CD4-positive, alpha-beta memory T cell (primary cell): ENCODE measurements at regions of chr17 and their contacts with region 1.

Region 1: GRCh38 chr17:66165513-66166123 is 26.3 kb downstream of the CEP112 start:
- DNase-seq: peak in 4 of 5 donors; percentile 47 to 56 (median 52)
- H3K4me3 ChIP-seq: no peak overlapping the region
- H3K4me3 Mint-ChIP-seq: no peak overlapping the region
- H3K27ac ChIP-seq: no peak overlapping the region
- H3K27ac Mint-ChIP-seq: no peak overlapping the region
- H3K4me1 ChIP-seq: no peaks in the 10 kb centered on the region
- H3K4me1 Mint-ChIP-seq: peaks cover 10 to 20% (median 13%) of the 10 kb centered on the region in 4 donors
- H3K27me3 ChIP-seq: no peaks in the 10 kb centered on the region
- H3K27me3 Mint-ChIP-seq: no peaks in the 10 kb centered on the region

Region 2: GRCh38 chr17:65231662-65232335 is 933.8 kb before region 1 on chr17:
- CTCF ChIA-PET with region 1: interaction called, 9 read pairs
- POLR2A ChIA-PET with region 1: no interaction called
- intact Hi-C with region 1: loop called (anchors 1 kb)
- DNase-seq: peak; percentile 42 to 51 (median 46)
- H3K4me3 ChIP-seq: no peak overlapping the region
- H3K4me3 Mint-ChIP-seq: no peak overlapping the region
- H3K27ac ChIP-seq: no peak overlapping the region
- H3K27ac Mint-ChIP-seq: no peak overlapping the region
- H3K4me1 ChIP-seq: peaks cover 24% of the 10 kb centered on the region
- H3K4me1 Mint-ChIP-seq: peaks cover 23 to 46% (median 26%) of the 10 kb centered on the region in 4 donors
- H3K27me3 ChIP-seq: no peaks in the 10 kb centered on the region
- H3K27me3 Mint-ChIP-seq: no peaks in the 10 kb centered on the region

Region 3: DNA sequence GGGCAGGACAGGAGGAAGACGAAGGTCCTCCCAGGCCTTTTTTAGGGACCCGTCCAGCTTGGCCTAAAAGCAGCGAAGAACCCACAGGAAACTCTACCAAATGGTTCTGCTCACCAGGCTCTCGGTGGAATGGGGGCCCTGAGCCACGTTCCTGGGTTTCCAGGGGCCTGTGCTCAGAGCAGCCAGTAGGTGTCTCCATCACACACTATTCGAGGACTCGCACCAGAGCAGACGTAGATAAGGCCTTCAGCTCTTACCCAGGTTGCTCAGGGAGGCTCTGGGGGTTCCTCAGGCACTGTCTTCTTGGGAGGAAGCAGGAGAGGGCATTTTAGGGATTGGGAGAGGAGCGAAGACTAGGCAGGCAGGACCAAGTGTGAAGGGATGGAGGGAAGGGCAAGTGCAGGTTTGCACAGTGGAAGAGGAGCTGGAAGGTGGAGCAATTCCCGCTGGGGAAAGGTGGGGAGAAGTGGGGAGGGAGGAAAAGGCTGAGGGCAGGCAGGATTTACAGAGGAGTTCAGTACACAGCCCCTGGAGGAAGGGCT is 871.4 kb before region 1 on chr17:
- CTCF ChIA-PET with region 1: interaction called, 65 read pairs
- POLR2A ChIA-PET with region 1: no interaction called
- intact Hi-C with region 1: no loop called
- DNase-seq: peak; percentile 49 to 61 (median 55)
- H3K4me3 ChIP-seq: no peak overlapping the region
- H3K4me3 Mint-ChIP-seq: no peak overlapping the region
- H3K27ac ChIP-seq: no peak overlapping the region
- H3K27ac Mint-ChIP-seq: peak overlapping the region in 1 of 7 donors; percentile 7
- H3K4me1 ChIP-seq: no peaks in the 10 kb centered on the region
- H3K4me1 Mint-ChIP-seq: peaks cover 0 to 6% (median 4%) of the 10 kb centered on the region in 4 donors
- H3K27me3 ChIP-seq: no peaks in the 10 kb centered on the region
- H3K27me3 Mint-ChIP-seq: peaks cover 0 to 2% of the 10 kb centered on the region in 2 donors

Region 4: DNA sequence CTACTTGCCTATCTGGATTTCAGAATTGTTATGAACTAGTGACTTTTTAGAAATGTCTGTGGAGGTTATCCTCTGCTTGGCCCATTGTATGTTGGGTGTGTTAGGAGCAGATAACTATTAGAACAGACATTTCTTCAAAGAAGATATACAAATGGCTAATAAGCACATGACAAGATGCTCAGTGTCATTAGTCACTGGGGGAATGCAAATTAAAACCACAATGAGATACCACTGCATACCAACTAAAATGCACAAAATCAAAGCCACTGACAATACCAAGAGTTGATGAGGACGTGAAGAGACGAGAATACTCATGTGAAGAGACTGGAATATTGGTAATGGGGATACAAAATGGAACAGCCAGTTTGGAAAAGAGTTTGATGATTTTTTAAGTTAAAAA is 12.9 kb before region 1 on chr17:
- CTCF ChIA-PET with region 1: interaction called, 12 read pairs
- POLR2A ChIA-PET with region 1: no interaction called
- intact Hi-C with region 1: no loop called
- DNase-seq: no peak
- H3K4me3 ChIP-seq: no peak overlapping the region
- H3K4me3 Mint-ChIP-seq: no peak overlapping the region
- H3K27ac ChIP-seq: no peak overlapping the region
- H3K27ac Mint-ChIP-seq: peak overlapping the region in 1 of 7 donors; percentile 2
- H3K4me1 ChIP-seq: no peaks in the 10 kb centered on the region
- H3K4me1 Mint-ChIP-seq: peaks cover 0 to 9% (median 4%) of the 10 kb centered on the region in 4 donors
- H3K27me3 ChIP-seq: no peaks in the 10 kb centered on the region
- H3K27me3 Mint-ChIP-seq: no peaks in the 10 kb centered on the region